Activated CD4-positive, alpha-beta T cell treated with anti-CD3 and anti-CD28 coated beads for 36 hours (primary cell): ENCODE measurements at regions of chr9 and their contacts with region 1.

Region 1: GRCh38 chr9:72364679-72365524 is at the start of gene ZFAND5:
- DNase-seq: peak; percentile 97
- ATAC-seq: peak; percentile 84
- H3K4me3 Mint-ChIP-seq: peak within 1 kb of the TSS; percentile 91
- H3K27ac Mint-ChIP-seq: peak within 1 kb of the TSS; percentile 99
- H3K4me1 Mint-ChIP-seq: peaks cover 37% of the 10 kb centered on the region
- H3K27me3 Mint-ChIP-seq: no peaks in the 10 kb centered on the region
- total RNA-seq, gene ZFAND5: 72.0 to 88.2 TPM

Region 2: DNA sequence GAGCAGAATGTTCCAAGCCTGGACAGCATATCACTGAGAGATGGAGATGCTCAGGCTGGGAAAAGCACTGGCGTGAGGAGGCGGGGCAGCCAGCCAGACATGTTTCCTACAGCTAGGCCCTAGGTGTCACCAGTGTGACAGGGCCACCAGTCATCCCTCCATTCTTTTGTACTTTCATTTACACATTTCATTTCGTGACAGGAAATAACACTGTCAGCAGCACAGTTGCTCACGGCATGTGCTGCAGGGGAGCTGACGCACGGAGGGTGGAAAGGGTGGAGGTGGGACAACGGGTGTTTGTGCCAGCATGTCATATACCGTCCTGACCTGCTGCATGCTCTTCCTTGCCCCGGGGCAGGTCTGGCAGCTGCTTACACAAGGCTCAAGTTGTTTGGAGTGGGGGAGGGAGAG is 581.8 kb before region 1 on chr9:
- CTCF ChIA-PET with region 1: no interaction called
- POLR2A ChIA-PET with region 1: no interaction called
- intact Hi-C with region 1: loop called (anchors 5 to 10 kb)
- DNase-seq: peak; percentile 93
- ATAC-seq: peak; percentile 97
- H3K4me3 Mint-ChIP-seq: peak overlapping the region; percentile 68
- H3K27ac Mint-ChIP-seq: peak overlapping the region; percentile 98
- H3K4me1 Mint-ChIP-seq: peaks cover 48% of the 10 kb centered on the region
- H3K27me3 Mint-ChIP-seq: no peaks in the 10 kb centered on the region

Region 3: DNA sequence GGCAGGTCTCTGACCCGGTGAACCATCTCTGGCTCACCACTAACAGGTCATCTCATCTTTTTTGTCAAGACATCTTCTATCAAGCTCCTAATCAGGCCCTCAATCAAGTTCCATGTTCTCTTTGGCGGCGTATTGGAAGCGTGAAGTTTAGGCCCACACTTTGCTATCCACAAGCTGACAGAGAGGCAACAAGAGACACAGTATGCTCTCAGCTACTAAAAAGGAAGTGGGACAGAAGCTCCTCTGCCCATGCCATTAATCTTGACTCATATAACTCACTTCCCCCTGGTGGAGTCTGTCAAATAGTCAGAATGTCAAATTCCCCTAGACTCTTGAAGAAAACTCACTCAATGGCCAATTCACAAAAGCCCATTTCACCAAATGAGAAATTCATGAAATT is 79.0 kb after region 1 on chr9:
- CTCF ChIA-PET with region 1: no interaction called
- POLR2A ChIA-PET with region 1: interaction called, 5 read pairs
- intact Hi-C with region 1: loop called in 1 of 2 experiments (anchors 1 kb)
- DNase-seq: peak; percentile 8
- ATAC-seq: peak; percentile 72
- H3K4me3 Mint-ChIP-seq: no peak overlapping the region
- H3K27ac Mint-ChIP-seq: peak overlapping the region; percentile 55
- H3K4me1 Mint-ChIP-seq: peaks cover 24% of the 10 kb centered on the region
- H3K27me3 Mint-ChIP-seq: no peaks in the 10 kb centered on the region

Region 4: GRCh38 chr9:72592502-72593403 is 227.9 kb after region 1 on chr9:
- CTCF ChIA-PET with region 1: interaction called, 4 read pairs
- POLR2A ChIA-PET with region 1: interaction called, 4 read pairs
- intact Hi-C with region 1: loop called in 1 of 2 experiments (anchors 1 kb)
- DNase-seq: peak; percentile 29
- ATAC-seq: peak; percentile 69
- H3K4me3 Mint-ChIP-seq: no peak overlapping the region
- H3K27ac Mint-ChIP-seq: no peak overlapping the region
- H3K4me1 Mint-ChIP-seq: peaks cover 19% of the 10 kb centered on the region
- H3K27me3 Mint-ChIP-seq: peaks cover 6% of the 10 kb centered on the region

Region 5: DNA sequence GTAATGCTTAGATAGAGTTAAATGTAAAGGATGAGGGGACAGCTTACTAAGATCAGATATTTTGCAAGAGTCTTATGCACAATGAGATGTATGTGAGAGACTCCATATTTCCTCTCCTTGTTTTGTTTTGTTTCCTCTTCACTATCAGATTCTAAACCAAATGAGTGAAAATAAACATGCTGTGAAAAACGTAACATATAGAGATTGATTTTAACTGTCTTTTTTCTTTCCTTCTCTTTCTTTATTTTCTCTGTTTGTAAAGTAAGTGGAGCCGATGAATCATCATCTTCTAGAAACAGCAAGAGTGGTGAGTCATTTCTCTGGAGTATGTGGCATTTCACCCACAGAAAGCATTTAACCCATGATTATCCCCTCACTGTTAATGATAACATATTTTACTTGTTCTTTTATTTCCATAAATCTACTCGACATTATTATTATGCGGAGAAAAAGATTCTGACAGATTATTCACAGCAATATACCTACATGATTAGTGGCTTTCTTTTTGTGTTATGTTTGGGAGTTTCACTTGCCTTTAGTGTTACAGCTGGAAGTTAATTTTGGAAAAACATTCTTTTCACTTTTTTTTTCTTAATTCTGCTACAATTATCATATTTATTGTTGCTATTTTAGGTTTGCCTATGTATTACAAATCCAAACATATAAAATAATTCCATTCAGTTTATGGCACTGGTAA is 784.6 kb after region 1 on chr9:
- CTCF ChIA-PET with region 1: no interaction called
- POLR2A ChIA-PET with region 1: no interaction called
- intact Hi-C with region 1: loop called in 1 of 2 experiments (anchors 5 kb)
- DNase-seq: no peak
- ATAC-seq: peak; percentile 65
- H3K4me3 Mint-ChIP-seq: peak overlapping the region; percentile 64
- H3K27ac Mint-ChIP-seq: peak overlapping the region; percentile 81
- H3K4me1 Mint-ChIP-seq: peaks cover 61% of the 10 kb centered on the region
- H3K27me3 Mint-ChIP-seq: no peaks in the 10 kb centered on the region